Heart left ventricle (tissue), 16 donors: ENCODE measurements at regions of chr7 and their contacts with region 1.

Region 1: DNA sequence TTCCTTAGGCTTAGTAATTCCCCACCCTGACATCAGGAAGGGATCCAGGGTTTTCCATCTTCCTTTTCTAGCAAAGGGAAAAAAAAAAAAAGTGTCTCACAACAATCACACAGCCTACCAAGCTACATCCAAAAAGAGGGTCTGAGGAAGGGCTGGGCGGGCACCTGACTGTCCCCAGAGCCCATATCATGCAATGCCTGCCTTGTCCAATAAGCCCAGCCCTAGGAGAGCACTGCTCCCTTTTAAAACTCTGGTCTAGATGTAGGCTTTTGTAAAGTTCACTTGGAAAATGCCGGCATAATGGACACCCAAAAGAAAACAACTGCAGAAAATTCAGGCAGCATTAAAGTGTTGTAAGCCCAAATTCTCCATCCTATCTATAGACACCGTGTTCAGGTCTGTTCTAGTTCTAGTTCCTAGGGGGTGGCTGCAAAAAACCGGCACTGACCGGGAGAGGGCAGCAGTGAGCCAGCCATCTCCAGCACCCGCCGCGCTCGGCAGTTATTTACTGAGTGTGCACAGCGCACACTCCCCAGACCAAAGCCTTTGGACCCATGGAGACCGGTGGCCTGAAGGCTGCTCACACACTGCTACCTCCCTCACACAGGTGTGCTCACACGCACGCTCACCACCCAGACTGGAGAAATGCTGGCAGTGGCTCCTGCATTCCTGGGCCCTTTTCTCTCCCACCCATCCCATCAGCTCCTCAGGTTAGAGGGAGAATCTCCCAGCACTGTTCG is 48.7 kb downstream of the PODXL start:
- DNase-seq: peak; percentile 82 to 92 (median 84)
- ATAC-seq: peak; percentile 54 to 72 (median 66)
- H3K4me3 ChIP-seq: peak overlapping the region in 3 of 12 donors; percentile 10 to 19 (median 10)
- H3K27ac ChIP-seq: peak overlapping the region in 6 of 12 donors; percentile 21 to 59 (median 27)
- H3K4me1 ChIP-seq: peaks cover 10 to 63% (median 45%) of the 10 kb centered on the region in 12 donors
- H3K27me3 ChIP-seq: no peaks in the 10 kb centered on the region
- CTCF ChIP-seq: peak; percentile 90 to 98 (median 94)
- POLR2A ChIP-seq: no peak

Region 2: GRCh38 chr7:131302876-131303707 is 204.7 kb before region 1 on chr7:
- intact Hi-C with region 1: no loop called
- DNase-seq: no peak
- ATAC-seq: peak in 3 of 4 donors; percentile 39 to 58 (median 46)
- H3K4me3 ChIP-seq: no peak overlapping the region
- H3K27ac ChIP-seq: peak overlapping the region in 8 of 12 donors; percentile 4 to 72 (median 55)
- H3K4me1 ChIP-seq: peaks cover 0 to 41% (median 22%) of the 10 kb centered on the region in 12 donors
- H3K27me3 ChIP-seq: no peaks in the 10 kb centered on the region
- CTCF ChIP-seq: peak; percentile 34 to 70 (median 56)
- POLR2A ChIP-seq: no peak

Region 3: GRCh38 chr7:131540441-131541162 is 32.8 kb after region 1 on chr7:
- intact Hi-C with region 1: loop called in 6 of 10 experiments (anchors 2 to 5 kb)
- DNase-seq: no peak
- ATAC-seq: peak in 2 of 4 donors; percentile 2 to 5
- H3K4me3 ChIP-seq: peak overlapping the region in 3 of 12 donors; percentile 0 to 1 (median 1)
- H3K27ac ChIP-seq: peak overlapping the region; percentile 56 to 92 (median 76)
- H3K4me1 ChIP-seq: peaks cover 17 to 99% (median 79%) of the 10 kb centered on the region in 12 donors
- H3K27me3 ChIP-seq: no peaks in the 10 kb centered on the region
- CTCF ChIP-seq: peak in 11 of 12 donors; percentile 20 to 47 (median 36)
- POLR2A ChIP-seq: no peak

Region 4: GRCh38 chr7:131581241-131582051 is 73.7 kb after region 1 on chr7:
- intact Hi-C with region 1: loop called in 1 of 10 experiments (anchors 10 kb)
- DNase-seq: peak; percentile 86 to 93 (median 87)
- ATAC-seq: peak; percentile 88 to 94 (median 92)
- H3K4me3 ChIP-seq: no peak overlapping the region
- H3K27ac ChIP-seq: peak overlapping the region; percentile 76 to 95 (median 83)
- H3K4me1 ChIP-seq: peaks cover 0 to 37% (median 25%) of the 10 kb centered on the region in 12 donors
- H3K27me3 ChIP-seq: no peaks in the 10 kb centered on the region
- CTCF ChIP-seq: peak in 9 of 12 donors; percentile 10 to 43 (median 18)
- POLR2A ChIP-seq: no peak

Region 5: DNA sequence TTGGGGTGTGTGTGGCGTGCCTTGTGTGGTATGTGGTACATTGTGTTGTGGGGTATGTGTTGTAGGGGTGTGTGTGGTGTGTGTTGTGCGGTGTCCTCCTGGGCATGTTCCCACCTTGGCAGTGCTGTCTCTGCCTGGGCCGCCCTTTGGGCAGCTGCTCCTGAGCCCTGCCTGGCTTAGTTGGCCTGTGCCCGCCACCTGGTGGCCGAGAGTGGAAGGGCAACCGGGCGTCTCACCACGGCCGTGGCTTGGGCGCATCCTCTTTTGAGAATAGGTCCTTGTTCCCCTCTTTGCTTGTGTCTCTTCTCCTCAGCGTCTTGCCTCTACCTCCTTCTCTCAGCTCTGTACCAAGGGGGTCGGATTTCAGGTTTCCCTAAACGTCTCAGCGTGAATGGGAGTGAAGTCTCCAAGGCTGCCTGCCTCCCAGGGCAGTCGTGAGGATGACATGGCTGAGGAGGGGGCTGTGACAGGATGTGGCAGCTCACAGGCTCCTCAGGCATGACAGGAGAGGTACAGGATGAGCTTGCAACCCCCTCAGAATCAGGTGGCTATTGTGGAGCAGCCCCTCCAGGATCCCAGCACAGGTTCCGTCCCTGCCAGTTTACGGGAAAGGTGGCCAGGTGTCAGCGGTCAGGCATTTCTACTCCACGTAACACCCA is 147.0 kb after region 1 on chr7:
- intact Hi-C with region 1: loop called (anchors 1 to 2 kb)
- DNase-seq: peak; percentile 85 to 92 (median 89)
- ATAC-seq: peak; percentile 82 to 89 (median 86)
- H3K4me3 ChIP-seq: no peak overlapping the region
- H3K27ac ChIP-seq: no peak overlapping the region
- H3K4me1 ChIP-seq: peaks cover 0 to 23% (median 8%) of the 10 kb centered on the region in 12 donors
- H3K27me3 ChIP-seq: no peaks in the 10 kb centered on the region
- CTCF ChIP-seq: peak; percentile 84 to 94 (median 88)
- POLR2A ChIP-seq: no peak